ENCODE measurements at regions of chr13 and their contacts with region 1.

Region 1: GRCh38 chr13:91313103-91313502 is 34.4 kb upstream of the MIR17HG start:
- DNase-seq: peak in 4 of 14 experiments; percentile 32 to 64 (median 57)
- ATAC-seq: peak; percentile 57
- H3K4me3 ChIP-seq: no peak overlapping the region
- H3K4me3 Mint-ChIP-seq: no peak overlapping the region
- H3K27ac ChIP-seq: no peak overlapping the region
- H3K27ac Mint-ChIP-seq: no peak overlapping the region
- H3K4me1 ChIP-seq: no peaks in the 10 kb centered on the region
- H3K4me1 Mint-ChIP-seq: no peaks in the 10 kb centered on the region
- H3K27me3 ChIP-seq: peaks cover 0 to 15% of the 10 kb centered on the region in 2 experiments
- H3K27me3 Mint-ChIP-seq: peaks cover 17% of the 10 kb centered on the region
- CTCF ChIP-seq: peak; percentile 69

Region 2: GRCh38 chr13:91348906-91349435 is 35.9 kb after region 1 on chr13:
- CTCF ChIA-PET with region 1: interaction called, 4 read pairs
- POLR2A ChIA-PET with region 1: interaction called, 11 read pairs
- intact Hi-C with region 1: loop called (anchors 2 kb)
- DNase-seq: peak; percentile 81 to 95 (median 89)
- ATAC-seq: peak; percentile 58
- H3K4me3 ChIP-seq: peak overlapping the region; percentile 60
- H3K4me3 Mint-ChIP-seq: peak overlapping the region; percentile 92
- H3K27ac ChIP-seq: no peak overlapping the region
- H3K27ac Mint-ChIP-seq: peak overlapping the region; percentile 82
- H3K4me1 ChIP-seq: peaks cover 16% of the 10 kb centered on the region
- H3K4me1 Mint-ChIP-seq: peaks cover 47% of the 10 kb centered on the region
- H3K27me3 ChIP-seq: no peaks in the 10 kb centered on the region
- H3K27me3 Mint-ChIP-seq: no peaks in the 10 kb centered on the region
- CTCF ChIP-seq: peak; percentile 79

Region 3: DNA sequence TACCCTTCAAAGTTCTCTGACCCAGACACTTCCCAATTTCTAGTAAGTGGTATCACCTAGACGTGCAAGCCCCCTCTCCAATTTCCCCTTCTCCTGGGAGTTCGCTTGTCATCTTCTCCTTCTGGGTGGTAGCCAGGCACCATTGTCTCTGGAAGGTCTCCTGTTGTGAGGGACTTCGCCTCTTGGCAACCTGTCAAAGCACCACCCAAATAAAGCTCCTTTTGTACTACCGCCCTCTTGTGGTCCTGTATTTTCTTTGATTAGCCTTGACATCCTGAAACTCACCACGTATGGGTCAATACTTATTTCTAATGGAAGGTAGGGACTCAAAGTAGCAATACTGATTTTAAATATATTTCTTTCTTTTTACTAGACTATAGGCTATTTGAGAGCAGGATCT is 93.5 kb after region 1 on chr13:
- CTCF ChIA-PET with region 1: no interaction called
- POLR2A ChIA-PET with region 1: no interaction called
- intact Hi-C with region 1: loop called in 1 of 2 experiments (anchors 5 kb)
- DNase-seq: peak in 4 of 14 experiments; percentile 29 to 60 (median 50)
- ATAC-seq: no peak
- H3K4me3 ChIP-seq: no peak overlapping the region
- H3K4me3 Mint-ChIP-seq: no peak overlapping the region
- H3K27ac ChIP-seq: no peak overlapping the region
- H3K27ac Mint-ChIP-seq: no peak overlapping the region
- H3K4me1 ChIP-seq: no peaks in the 10 kb centered on the region
- H3K4me1 Mint-ChIP-seq: no peaks in the 10 kb centered on the region
- H3K27me3 ChIP-seq: peaks cover 0 to 5% of the 10 kb centered on the region in 2 experiments
- H3K27me3 Mint-ChIP-seq: peaks cover 23% of the 10 kb centered on the region
- CTCF ChIP-seq: peak; percentile 50

Region 4: DNA sequence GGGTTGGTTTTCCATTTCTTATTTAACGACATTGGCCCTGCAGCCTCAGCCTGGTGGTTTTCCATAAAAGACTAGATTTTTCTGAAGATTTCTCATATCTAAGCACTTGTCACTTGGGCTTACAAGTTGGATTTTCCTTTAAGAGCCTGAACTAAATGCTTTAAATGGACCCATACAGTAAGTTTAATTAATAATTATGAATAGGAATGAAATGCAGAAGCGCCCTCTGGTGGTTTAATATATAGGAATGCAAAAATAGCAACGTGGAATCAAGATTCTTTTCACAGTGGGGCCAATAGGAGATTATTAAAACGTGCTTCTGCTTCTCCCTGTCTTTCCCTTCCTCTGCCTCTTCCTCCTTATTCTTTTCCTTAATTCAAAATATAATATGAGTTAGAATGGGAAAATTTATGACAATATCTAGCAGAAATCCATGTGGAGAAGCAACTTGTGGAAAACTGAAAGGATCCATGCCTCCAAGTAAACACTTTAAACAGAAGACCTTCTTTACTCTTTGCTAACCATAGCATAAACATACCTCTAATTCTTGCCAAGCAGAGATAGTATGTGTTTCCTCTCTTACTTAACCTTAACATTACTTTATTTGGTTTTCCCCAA is 409.3 kb after region 1 on chr13:
- CTCF ChIA-PET with region 1: no interaction called
- POLR2A ChIA-PET with region 1: no interaction called
- intact Hi-C with region 1: loop called (anchors 5 kb)
- DNase-seq: peak in 3 of 14 experiments; percentile 21 to 33 (median 29)
- ATAC-seq: no peak
- H3K4me3 ChIP-seq: no peak overlapping the region
- H3K4me3 Mint-ChIP-seq: no peak overlapping the region
- H3K27ac ChIP-seq: no peak overlapping the region
- H3K27ac Mint-ChIP-seq: no peak overlapping the region
- H3K4me1 ChIP-seq: no peaks in the 10 kb centered on the region
- H3K4me1 Mint-ChIP-seq: no peaks in the 10 kb centered on the region
- H3K27me3 ChIP-seq: no peaks in the 10 kb centered on the region
- H3K27me3 Mint-ChIP-seq: no peaks in the 10 kb centered on the region
- CTCF ChIP-seq: peak; percentile 81